Calu3 (cell line): ENCODE measurements at regions of chr9 and their contacts with region 1.

Region 1: GRCh38 chr9:2181792-2182191 is 166.6 kb downstream of the SMARCA2 start:
- DNase-seq: peak; percentile 37
- H3K4me3 Mint-ChIP-seq: no peak overlapping the region
- H3K27ac Mint-ChIP-seq: no peak overlapping the region
- H3K4me1 Mint-ChIP-seq: peaks cover 11% of the 10 kb centered on the region
- H3K27me3 Mint-ChIP-seq: no peaks in the 10 kb centered on the region
- CTCF ChIP-seq: no peak

Region 2: GRCh38 chr9:3992924-3993323 is 1811.1 kb after region 1 on chr9:
- CTCF ChIA-PET with region 1: interaction called, 12 read pairs
- intact Hi-C with region 1: no loop called
- DNase-seq: no peak
- H3K4me3 Mint-ChIP-seq: no peak overlapping the region
- H3K27ac Mint-ChIP-seq: no peak overlapping the region
- H3K4me1 Mint-ChIP-seq: peaks cover 16% of the 10 kb centered on the region
- H3K27me3 Mint-ChIP-seq: no peaks in the 10 kb centered on the region
- CTCF ChIP-seq: no peak